ENCODE measurements at regions of chr15 and their contacts with region 1.

Region 1: DNA sequence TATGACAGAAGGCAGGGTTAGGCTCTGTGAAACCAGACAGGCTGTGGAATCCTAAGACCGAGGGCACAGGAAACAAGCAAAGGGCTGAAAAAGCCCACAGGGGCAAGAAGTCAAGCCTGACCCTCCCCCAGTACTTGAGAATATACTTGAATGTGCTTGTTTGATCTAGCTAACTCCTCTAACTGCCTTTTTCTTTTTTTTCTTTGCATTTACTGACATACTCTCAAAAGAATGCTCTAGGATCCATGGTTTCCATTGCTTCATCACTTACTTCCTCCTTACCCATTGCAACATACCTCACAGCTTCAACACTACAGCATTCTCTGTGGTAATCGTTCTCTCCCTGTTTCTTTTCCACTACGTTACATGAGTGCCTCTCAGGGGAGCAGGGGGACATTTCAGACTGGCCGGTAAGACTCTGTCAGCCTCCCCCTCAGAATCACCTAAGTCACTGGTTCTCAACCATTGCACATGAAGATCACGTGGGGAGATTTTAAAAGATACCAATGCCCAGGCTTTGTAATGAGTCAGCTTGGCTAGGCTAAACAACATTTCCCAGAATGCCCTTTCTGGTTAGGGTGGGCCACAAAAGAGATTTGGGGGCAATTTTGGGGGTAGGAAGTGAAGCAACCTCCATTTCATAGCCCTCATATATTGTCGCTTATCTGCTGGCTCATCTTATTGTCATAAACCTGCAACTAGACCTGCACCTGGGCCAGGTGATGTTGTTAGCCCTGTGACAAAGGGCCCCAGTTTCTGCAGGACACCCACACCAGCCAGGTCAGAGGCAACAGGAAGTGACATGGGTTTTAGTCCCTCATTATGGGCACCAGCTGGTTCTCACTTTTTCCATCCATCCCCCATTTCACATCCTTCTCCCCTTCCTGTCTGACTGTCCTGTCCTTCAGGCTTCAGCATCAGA is 24.6 kb upstream of the RSL24D1 start:
- DNase-seq: peak; percentile 90
- H3K4me3 Mint-ChIP-seq: peak overlapping the region; percentile 34
- H3K27ac Mint-ChIP-seq: peak overlapping the region; percentile 91
- H3K4me1 Mint-ChIP-seq: peaks cover 22% of the 10 kb centered on the region
- H3K27me3 Mint-ChIP-seq: no peaks in the 10 kb centered on the region
- CTCF ChIP-seq: no peak

Region 2: DNA sequence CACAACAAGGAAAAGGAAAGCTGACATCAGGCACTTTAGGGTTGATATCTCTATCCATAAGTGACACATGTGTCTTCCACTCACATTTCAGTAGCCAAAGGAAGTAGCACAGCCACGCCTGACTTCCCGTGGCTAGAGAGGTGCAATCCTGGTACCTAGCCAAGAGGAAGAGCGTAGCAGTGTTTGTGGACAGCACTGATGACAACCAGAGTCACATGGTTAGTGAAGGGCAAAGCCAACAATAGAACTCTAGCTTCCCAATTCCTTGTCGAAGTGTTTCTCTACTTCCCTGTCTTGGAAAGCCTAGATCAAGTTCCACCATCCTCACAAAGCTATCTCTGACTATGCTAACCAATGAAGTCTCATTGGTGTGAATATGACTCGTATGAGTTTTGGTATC is 213.8 kb before region 1 on chr15:
- CTCF ChIA-PET with region 1: no interaction called
- POLR2A ChIA-PET with region 1: no interaction called
- intact Hi-C with region 1: no loop called
- DNase-seq: no peak
- H3K4me3 Mint-ChIP-seq: no peak overlapping the region
- H3K27ac Mint-ChIP-seq: no peak overlapping the region
- H3K4me1 Mint-ChIP-seq: no peaks in the 10 kb centered on the region
- H3K27me3 Mint-ChIP-seq: no peaks in the 10 kb centered on the region
- CTCF ChIP-seq: no peak

Region 3: GRCh38 chr15:55279746-55280351 is 58.5 kb after region 1 on chr15:
- CTCF ChIA-PET with region 1: interaction called, 4 read pairs
- POLR2A ChIA-PET with region 1: interaction called, 6 read pairs
- intact Hi-C with region 1: loop called (anchors 1 kb)
- DNase-seq: peak; percentile 87
- H3K4me3 Mint-ChIP-seq: no peak overlapping the region
- H3K27ac Mint-ChIP-seq: peak overlapping the region; percentile 69
- H3K4me1 Mint-ChIP-seq: peaks cover 27% of the 10 kb centered on the region
- H3K27me3 Mint-ChIP-seq: no peaks in the 10 kb centered on the region
- CTCF ChIP-seq: no peak

Region 4: GRCh38 chr15:55290528-55291057 is 69.2 kb after region 1 on chr15:
- CTCF ChIA-PET with region 1: interaction called, 134 read pairs
- POLR2A ChIA-PET with region 1: interaction called, 20 read pairs
- intact Hi-C with region 1: loop called (anchors 1 kb)
- DNase-seq: peak; percentile 84
- H3K4me3 Mint-ChIP-seq: peak overlapping the region; percentile 89
- H3K27ac Mint-ChIP-seq: peak overlapping the region; percentile 92
- H3K4me1 Mint-ChIP-seq: peaks cover 15% of the 10 kb centered on the region
- H3K27me3 Mint-ChIP-seq: no peaks in the 10 kb centered on the region
- CTCF ChIP-seq: peak; percentile 84

Region 5: DNA sequence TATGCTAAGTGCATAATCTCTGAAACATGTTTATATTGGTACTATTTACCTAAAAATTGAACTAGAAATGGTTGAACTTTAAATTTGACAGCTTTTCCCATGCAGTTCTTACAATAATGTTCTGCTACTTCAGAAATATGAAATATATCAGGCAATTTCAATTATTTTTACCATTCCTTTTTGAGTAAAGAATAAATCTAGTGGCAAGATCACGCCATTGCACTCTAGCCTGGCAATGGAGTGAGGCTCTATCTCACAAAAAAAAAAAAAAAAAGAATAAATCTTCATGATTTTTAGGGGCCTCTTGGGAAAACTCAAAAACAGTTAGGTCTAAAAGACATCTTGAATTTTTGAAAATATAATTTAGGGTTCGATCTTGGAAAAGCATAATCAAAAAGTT is 297.3 kb after region 1 on chr15:
- CTCF ChIA-PET with region 1: no interaction called
- POLR2A ChIA-PET with region 1: no interaction called
- intact Hi-C with region 1: no loop called
- DNase-seq: no peak
- H3K4me3 Mint-ChIP-seq: no peak overlapping the region
- H3K27ac Mint-ChIP-seq: no peak overlapping the region
- H3K4me1 Mint-ChIP-seq: no peaks in the 10 kb centered on the region
- H3K27me3 Mint-ChIP-seq: peaks cover 20% of the 10 kb centered on the region
- CTCF ChIP-seq: no peak

Measured in MCF 10A (cell line).